Naive thymus-derived CD8-positive, alpha-beta T cell (primary cell): ENCODE measurements at regions of chr7 and their contacts with region 1.

Region 1: GRCh38 chr7:134986363-134987251 is at the start of gene AGBL3:
- DNase-seq: peak; percentile 74 to 97 (median 90)
- ATAC-seq: peak; percentile 88 to 90
- H3K4me3 Mint-ChIP-seq: peak within 1 kb of the TSS; percentile 93 to 100 (median 98)
- H3K27ac Mint-ChIP-seq: peak within 1 kb of the TSS; percentile 95 to 100 (median 100)
- H3K4me1 Mint-ChIP-seq: peaks cover 26 to 55% (median 51%) of the 10 kb centered on the region in 4 donors
- H3K27me3 Mint-ChIP-seq: no peaks in the 10 kb centered on the region
- polyA plus RNA-seq, gene AGBL3: 1.8 to 4.0 (median 3.2) TPM

Region 2: GRCh38 chr7:134932707-134933370 is 53.8 kb before region 1 on chr7:
- POLR2A ChIA-PET with region 1: no interaction called
- DNase-seq: no peak
- ATAC-seq: no peak
- H3K4me3 Mint-ChIP-seq: peak overlapping the region in 7 of 10 donors; percentile 9 to 74 (median 27)
- H3K27ac Mint-ChIP-seq: peak overlapping the region in 3 of 10 donors; percentile 16 to 43 (median 40)
- H3K4me1 Mint-ChIP-seq: peaks cover 9 to 11% (median 10%) of the 10 kb centered on the region in 4 donors
- H3K27me3 Mint-ChIP-seq: peaks cover 0 to 3% (median 0%) of the 10 kb centered on the region in 5 donors

Region 3: GRCh38 chr7:135160098-135160857 is 173.7 kb after region 1 on chr7:
- POLR2A ChIA-PET with region 1: interaction called, 18 read pairs
- DNase-seq: no peak
- ATAC-seq: peak in 1 of 2 donors; percentile 20
- H3K4me3 Mint-ChIP-seq: peak overlapping the region in 6 of 10 donors; percentile 7 to 62 (median 32)
- H3K27ac Mint-ChIP-seq: peak overlapping the region; percentile 6 to 87 (median 74)
- H3K4me1 Mint-ChIP-seq: peaks cover 33 to 76% (median 71%) of the 10 kb centered on the region in 4 donors
- H3K27me3 Mint-ChIP-seq: no peaks in the 10 kb centered on the region